Cardiac septum (tissue), 1 donor: ENCODE measurements at regions of chr16 and their contacts with region 1.

Region 1: DNA sequence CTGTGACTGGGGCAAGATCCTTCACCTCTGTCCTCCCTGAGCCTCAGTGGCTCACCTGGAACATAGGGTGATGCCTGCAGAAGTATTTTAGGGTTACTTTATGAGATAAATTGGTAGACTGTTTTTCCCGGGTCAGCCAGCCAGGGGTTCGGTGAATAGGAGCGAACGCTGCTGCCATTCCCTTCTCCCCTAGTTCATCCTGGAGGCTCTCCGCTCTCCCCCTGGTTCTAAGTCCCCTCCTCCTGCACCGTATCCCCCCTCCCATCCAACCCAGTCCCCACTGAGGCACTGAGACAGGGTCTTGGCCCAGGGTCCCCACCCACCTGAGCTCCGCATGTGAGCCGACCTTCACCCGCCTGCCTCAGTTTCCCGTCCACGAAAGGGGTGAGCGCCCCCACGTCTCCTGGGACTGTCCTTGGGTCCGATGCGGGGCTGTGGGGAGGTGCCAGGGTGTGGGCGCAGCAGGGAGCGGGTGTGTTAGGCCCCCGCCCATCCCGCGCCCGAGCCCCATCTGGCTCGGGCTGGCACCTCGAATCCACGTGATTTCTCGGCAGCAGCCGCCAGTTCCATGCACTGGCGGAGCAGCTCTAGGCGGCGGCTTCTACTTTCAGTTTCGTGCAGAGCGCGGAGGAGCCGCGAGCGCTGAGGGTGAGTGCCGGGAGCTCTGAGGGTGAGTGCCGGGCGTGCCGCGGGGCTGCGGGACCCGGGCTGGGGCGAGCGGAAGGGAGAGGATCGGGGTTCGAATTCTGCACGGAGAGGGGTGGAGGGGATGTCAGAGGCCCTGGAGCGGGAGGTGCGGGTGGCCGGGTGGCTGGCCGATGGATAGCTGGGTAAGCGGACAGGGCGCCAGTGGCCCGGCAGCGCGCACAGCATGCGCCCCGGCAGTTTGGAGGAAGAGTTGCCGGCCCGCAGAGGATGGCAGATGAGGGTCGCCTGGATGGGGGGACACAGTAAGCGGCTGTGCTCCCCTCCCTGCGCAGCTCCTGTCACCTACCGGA is at the start of gene NLRC5:
- DNase-seq: peak; percentile 95
- total RNA-seq, gene NLRC5: 12.7 TPM

Region 2: DNA sequence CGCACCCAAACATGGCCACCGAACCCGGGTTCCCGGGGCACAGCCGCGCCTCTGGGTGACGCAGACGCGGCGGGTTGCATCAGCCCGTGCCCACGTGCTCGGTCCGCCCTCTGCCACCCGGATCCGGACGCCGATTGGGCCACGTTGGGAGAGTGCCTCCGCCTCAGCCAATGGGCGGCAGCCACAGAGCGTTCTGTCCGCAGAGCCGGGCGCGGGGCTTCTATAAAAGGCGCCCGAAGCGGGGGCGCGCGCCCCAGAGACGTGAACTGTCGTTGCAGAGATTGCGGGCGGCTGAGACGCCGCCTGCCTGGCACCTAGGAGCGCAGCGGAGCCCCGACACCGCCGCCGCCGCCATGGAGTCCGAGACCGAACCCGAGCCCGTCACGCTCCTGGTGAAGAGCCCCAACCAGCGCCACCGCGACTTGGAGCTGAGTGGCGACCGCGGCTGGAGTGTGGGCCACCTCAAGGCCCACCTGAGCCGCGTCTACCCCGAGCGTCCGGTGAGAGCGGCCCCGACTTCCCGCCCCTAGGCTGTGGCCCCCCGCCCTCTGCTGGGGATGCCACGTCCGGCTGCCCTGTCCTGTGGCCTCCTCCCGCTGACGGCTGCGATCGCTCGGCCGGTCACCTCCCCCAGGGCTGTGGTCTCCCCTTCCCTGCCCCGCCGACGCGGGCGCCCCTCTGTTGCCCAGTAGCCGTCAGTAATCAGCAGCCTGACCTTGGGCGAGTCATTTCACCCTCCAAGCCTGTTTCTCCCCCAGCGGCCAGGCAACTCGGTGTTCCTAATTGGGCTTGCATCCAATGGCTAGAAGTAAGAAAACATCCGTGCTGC is 57.1 kb before region 1 on chr16 and contains the start of gene HERPUD1:
- intact Hi-C with region 1: loop called (anchors 5 kb)
- DNase-seq: peak; percentile 99
- total RNA-seq, gene HERPUD1: 87.4 TPM